Adrenal gland (tissue), 19 donors: ENCODE measurements at regions of chr17 and their contacts with region 1.

Region 1: DNA sequence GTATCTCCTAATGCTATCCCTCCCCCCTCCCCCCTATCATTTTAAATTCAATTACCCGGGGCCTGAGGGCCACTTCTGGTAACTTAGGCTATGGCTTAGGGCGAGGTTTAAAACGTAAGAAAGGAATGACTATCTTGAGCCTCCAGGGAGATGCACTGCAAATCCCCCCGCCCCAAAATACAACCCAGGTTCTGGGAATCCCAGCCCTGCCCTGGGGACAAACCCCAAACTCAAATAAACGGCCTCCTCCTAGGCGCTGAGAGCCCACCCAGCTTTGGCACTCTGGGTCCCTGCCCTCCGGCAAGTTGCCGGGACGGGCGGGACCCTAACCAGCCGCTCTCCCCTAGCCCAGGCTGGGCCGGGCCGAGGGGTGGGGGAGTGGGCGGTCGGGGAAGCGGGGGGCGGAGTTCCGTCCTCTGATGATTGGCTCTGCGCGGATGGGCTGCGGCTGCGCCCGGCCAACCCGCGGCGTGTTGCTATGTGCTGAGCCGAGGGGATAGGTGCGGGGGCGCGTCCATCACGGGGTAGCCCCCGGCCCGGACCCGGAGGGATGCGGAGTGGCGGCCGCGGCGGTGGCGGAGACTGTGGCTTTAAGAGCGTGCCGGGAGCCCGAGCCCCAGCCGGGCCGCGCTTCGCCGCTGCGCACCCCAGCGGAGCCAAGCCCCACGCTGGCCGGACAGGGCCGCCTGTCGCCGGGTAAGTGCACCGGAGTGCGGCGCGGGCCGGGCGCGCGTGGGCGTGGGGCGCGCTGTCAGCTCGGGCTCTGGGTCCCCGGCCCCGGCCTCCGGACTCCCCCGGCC is at the start of gene YPEL2:
- DNase-seq: peak; percentile 96 to 98 (median 97)
- H3K4me3 ChIP-seq: peak within 1 kb of the TSS; percentile 45 to 95 (median 88)
- H3K27ac ChIP-seq: peak within 1 kb of the TSS; percentile 15 to 95 (median 94)
- H3K4me1 ChIP-seq: peaks cover 31 to 41% of the 10 kb centered on the region in 2 donors
- H3K27me3 ChIP-seq: no peaks in the 10 kb centered on the region
- CTCF ChIP-seq: peak in 1 of 6 experiments; percentile 6
- POLR2A ChIP-seq: peak; percentile 50 to 88
- total RNA-seq, gene YPEL2: 5.8 to 33.5 (median 27.6) TPM

Region 2: GRCh38 chr17:59366773-59367657 is 35.7 kb after region 1 on chr17:
- intact Hi-C with region 1: loop called in 1 of 2 experiments (anchors 5 kb)
- DNase-seq: peak in 6 of 7 donors; percentile 42 to 69 (median 44)
- H3K4me3 ChIP-seq: no peak overlapping the region
- H3K27ac ChIP-seq: peak overlapping the region in 4 of 5 donors; percentile 37 to 84 (median 74)
- H3K4me1 ChIP-seq: peaks cover 58 to 85% of the 10 kb centered on the region in 2 donors
- H3K27me3 ChIP-seq: no peaks in the 10 kb centered on the region
- CTCF ChIP-seq: no peak
- POLR2A ChIP-seq: no peak

Region 3: DNA sequence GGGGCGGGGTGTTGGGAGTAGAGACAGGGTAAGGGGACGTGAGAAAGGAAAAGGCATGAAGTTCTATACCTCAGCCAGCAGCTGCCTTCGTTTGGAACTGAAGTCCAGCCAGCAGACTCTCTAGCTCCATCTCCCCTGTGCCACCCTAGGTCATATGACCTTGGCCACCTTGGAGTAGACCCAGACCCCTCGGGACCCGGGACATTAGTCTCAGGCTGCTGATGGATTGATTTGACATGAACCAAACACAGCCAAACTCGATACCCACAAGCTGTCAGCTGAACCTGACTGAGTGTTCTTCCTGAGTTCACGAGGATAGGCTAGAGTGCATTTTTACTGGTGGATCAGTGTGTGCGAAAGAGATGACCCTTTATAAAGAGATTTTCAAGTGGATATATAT is 68.6 kb after region 1 on chr17:
- intact Hi-C with region 1: loop called in 1 of 2 experiments (anchors 10 kb)
- DNase-seq: no peak
- H3K4me3 ChIP-seq: no peak overlapping the region
- H3K27ac ChIP-seq: peak overlapping the region in 3 of 5 donors; percentile 6 to 49 (median 48)
- H3K4me1 ChIP-seq: peaks cover 19 to 37% of the 10 kb centered on the region in 2 donors
- H3K27me3 ChIP-seq: no peaks in the 10 kb centered on the region
- CTCF ChIP-seq: no peak
- POLR2A ChIP-seq: no peak

Region 4: GRCh38 chr17:59440784-59441441 is 109.6 kb after region 1 on chr17:
- intact Hi-C with region 1: loop called (anchors 5 kb)
- DNase-seq: peak; percentile 89 to 98 (median 93)
- H3K4me3 ChIP-seq: peak overlapping the region in 1 of 4 donors; percentile 3
- H3K27ac ChIP-seq: peak overlapping the region in 2 of 5 donors; percentile 24 to 60
- H3K4me1 ChIP-seq: peaks cover 6 to 7% of the 10 kb centered on the region in 2 donors
- H3K27me3 ChIP-seq: no peaks in the 10 kb centered on the region
- CTCF ChIP-seq: peak; percentile 65 to 93 (median 90)
- POLR2A ChIP-seq: no peak